Transverse colon (tissue), 4 donors: ENCODE measurements at regions of chr2 and their contacts with region 1.

Region 1: GRCh38 chr2:100057902-100058311 is 84.5 kb downstream of the AFF3 start:
- DNase-seq: no peak
- H3K4me3 ChIP-seq: no peak overlapping the region
- H3K27ac ChIP-seq: no peak overlapping the region
- H3K4me1 ChIP-seq: no peaks in the 10 kb centered on the region
- H3K27me3 ChIP-seq: no peaks in the 10 kb centered on the region
- CTCF ChIP-seq: no peak
- EP300 ChIP-seq: no peak
- POLR2A ChIP-seq: no peak

Region 2: DNA sequence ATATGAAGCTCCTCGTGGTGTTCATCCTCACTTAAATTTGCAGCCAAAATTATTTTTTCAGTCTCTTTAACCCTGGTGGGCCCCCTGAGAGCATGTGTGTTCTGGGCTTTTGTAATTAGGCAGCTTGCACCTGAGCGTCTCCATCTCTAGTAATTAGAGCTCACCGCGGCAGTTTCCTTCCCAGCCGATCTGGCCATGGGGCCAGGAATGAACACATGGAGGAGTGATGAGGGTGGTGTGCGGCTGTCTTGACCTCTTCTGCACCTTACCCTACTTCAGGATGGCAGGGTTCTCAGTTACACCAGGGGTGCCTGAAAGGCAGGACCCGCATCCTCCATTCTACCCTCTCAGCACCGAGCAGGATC is 14.0 kb before region 1 on chr2:
- in situ Hi-C with region 1: no loop called
- intact Hi-C with region 1: loop called (anchors 1 kb)
- DNase-seq: no peak
- H3K4me3 ChIP-seq: no peak overlapping the region
- H3K27ac ChIP-seq: no peak overlapping the region
- H3K4me1 ChIP-seq: no peaks in the 10 kb centered on the region
- H3K27me3 ChIP-seq: no peaks in the 10 kb centered on the region
- CTCF ChIP-seq: no peak
- EP300 ChIP-seq: no peak
- POLR2A ChIP-seq: no peak